Gastrocnemius medialis (tissue), 4 donors: ENCODE measurements at regions of chr10 and their contacts with region 1.

Region 1: GRCh38 chr10:987870-988666 is at the start of gene GTPBP4:
- DNase-seq: peak; percentile 98 to 99
- ATAC-seq: peak; percentile 97 to 98
- H3K4me3 ChIP-seq: peak within 1 kb of the TSS; percentile 80 to 100 (median 94)
- H3K27ac ChIP-seq: peak within 1 kb of the TSS; percentile 92 to 97 (median 96)
- H3K4me1 ChIP-seq: peaks cover 22 to 33% of the 10 kb centered on the region in 2 donors
- H3K27me3 ChIP-seq: no peaks in the 10 kb centered on the region
- CTCF ChIP-seq: no peak
- POLR2A ChIP-seq: peak; percentile 69 to 82
- total RNA-seq, gene GTPBP4: 34.7 to 51.5 (median 38.5) TPM

Region 2: GRCh38 chr10:683448-684071 is 304.5 kb before region 1 on chr10:
- in situ Hi-C with region 1: no loop called
- intact Hi-C with region 1: no loop called
- DNase-seq: peak; percentile 58 to 68
- ATAC-seq: peak; percentile 81 to 82
- H3K4me3 ChIP-seq: peak overlapping the region in 3 of 4 donors; percentile 2 to 47 (median 22)
- H3K27ac ChIP-seq: peak overlapping the region; percentile 77 to 88 (median 82)
- H3K4me1 ChIP-seq: peaks cover 49 to 67% of the 10 kb centered on the region in 2 donors
- H3K27me3 ChIP-seq: no peaks in the 10 kb centered on the region
- CTCF ChIP-seq: no peak
- POLR2A ChIP-seq: peak; percentile 25 to 73

Region 3: GRCh38 chr10:931416-932318 is 56.4 kb before region 1 on chr10 and contains the start of gene LARP4B:
- in situ Hi-C with region 1: loop called in 1 of 4 experiments (anchors 10 kb)
- intact Hi-C with region 1: loop called (anchors 1 kb)
- DNase-seq: peak; percentile 93 to 97
- ATAC-seq: peak; percentile 92 to 93
- H3K4me3 ChIP-seq: peak within 1 kb of the TSS; percentile 75 to 95 (median 82)
- H3K27ac ChIP-seq: peak within 1 kb of the TSS; percentile 96 to 100 (median 98)
- H3K4me1 ChIP-seq: peaks cover 37 to 45% of the 10 kb centered on the region in 2 donors
- H3K27me3 ChIP-seq: no peaks in the 10 kb centered on the region
- CTCF ChIP-seq: no peak
- POLR2A ChIP-seq: peak; percentile 88 to 90
- total RNA-seq, gene LARP4B: 29.7 to 45.6 (median 40.0) TPM

Region 4: DNA sequence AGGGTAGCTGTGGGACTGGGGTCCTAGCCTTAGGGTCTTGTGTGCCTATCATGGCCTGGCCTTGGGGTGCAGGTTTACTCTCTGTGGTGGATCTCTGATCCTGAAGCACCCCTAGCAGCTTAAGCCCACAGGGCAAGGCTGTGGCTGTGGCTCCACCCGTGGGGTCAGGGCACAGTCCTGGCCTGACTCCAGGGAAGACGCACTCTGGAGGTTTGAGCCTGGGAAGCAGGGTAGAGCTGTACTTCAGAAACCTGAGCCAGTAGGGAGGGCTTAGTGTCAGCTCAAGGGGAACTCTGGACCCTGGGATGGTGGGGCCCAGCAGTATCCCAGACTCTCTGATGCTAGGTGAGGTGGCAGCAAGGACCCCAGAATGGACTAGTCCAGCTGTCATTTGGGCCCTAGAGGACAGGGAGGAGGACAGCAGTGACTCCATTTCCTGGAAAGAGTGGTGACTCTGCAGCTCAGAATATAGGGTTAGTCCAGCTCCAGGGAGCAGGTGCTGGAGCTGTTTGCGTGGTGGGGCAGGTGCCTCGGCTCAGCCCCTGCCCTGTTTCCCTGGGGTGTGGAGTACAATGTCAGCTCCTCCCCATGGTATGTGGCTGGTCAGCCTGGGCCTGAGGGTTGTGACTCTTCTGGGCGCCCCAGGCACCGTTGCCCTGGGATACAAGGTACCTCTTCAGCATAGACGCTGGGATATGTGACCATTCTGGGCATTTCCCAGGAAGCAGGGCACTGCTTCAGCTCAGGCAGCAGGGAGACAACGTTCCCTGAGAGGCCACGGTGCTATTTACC is 16.0 kb after region 1 on chr10:
- in situ Hi-C with region 1: no loop called
- intact Hi-C with region 1: no loop called
- DNase-seq: no peak
- ATAC-seq: no peak
- H3K4me3 ChIP-seq: no peak overlapping the region
- H3K27ac ChIP-seq: no peak overlapping the region
- H3K4me1 ChIP-seq: no peaks in the 10 kb centered on the region
- H3K27me3 ChIP-seq: no peaks in the 10 kb centered on the region
- CTCF ChIP-seq: no peak
- POLR2A ChIP-seq: no peak

Region 5: GRCh38 chr10:1056326-1057105 is 68.4 kb after region 1 on chr10 and contains the start of gene WDR37:
- in situ Hi-C with region 1: loop called in 1 of 4 experiments (anchors 5 kb)
- intact Hi-C with region 1: loop called (anchors 1 kb)
- DNase-seq: peak; percentile 76 to 86
- ATAC-seq: peak; percentile 88 to 95
- H3K4me3 ChIP-seq: peak within 1 kb of the TSS; percentile 84 to 99 (median 98)
- H3K27ac ChIP-seq: peak within 1 kb of the TSS; percentile 96 to 100 (median 98)
- H3K4me1 ChIP-seq: peaks cover 61 to 62% of the 10 kb centered on the region in 2 donors
- H3K27me3 ChIP-seq: no peaks in the 10 kb centered on the region
- CTCF ChIP-seq: peak in 1 of 5 experiments; percentile 10
- POLR2A ChIP-seq: peak; percentile 90 to 92
- total RNA-seq, gene WDR37: 18.4 to 26.2 (median 23.2) TPM

Region 6: GRCh38 chr10:1061930-1062774 is 74.1 kb after region 1 on chr10:
- in situ Hi-C with region 1: loop called in 1 of 4 experiments (anchors 5 kb)
- intact Hi-C with region 1: no loop called
- DNase-seq: no peak
- ATAC-seq: no peak
- H3K4me3 ChIP-seq: no peak overlapping the region
- H3K27ac ChIP-seq: no peak overlapping the region
- H3K4me1 ChIP-seq: peaks cover 35 to 49% of the 10 kb centered on the region in 2 donors
- H3K27me3 ChIP-seq: no peaks in the 10 kb centered on the region
- CTCF ChIP-seq: no peak
- POLR2A ChIP-seq: no peak